ENCODE measurements at regions of chr1 and their contacts with region 1.

Region 1: DNA sequence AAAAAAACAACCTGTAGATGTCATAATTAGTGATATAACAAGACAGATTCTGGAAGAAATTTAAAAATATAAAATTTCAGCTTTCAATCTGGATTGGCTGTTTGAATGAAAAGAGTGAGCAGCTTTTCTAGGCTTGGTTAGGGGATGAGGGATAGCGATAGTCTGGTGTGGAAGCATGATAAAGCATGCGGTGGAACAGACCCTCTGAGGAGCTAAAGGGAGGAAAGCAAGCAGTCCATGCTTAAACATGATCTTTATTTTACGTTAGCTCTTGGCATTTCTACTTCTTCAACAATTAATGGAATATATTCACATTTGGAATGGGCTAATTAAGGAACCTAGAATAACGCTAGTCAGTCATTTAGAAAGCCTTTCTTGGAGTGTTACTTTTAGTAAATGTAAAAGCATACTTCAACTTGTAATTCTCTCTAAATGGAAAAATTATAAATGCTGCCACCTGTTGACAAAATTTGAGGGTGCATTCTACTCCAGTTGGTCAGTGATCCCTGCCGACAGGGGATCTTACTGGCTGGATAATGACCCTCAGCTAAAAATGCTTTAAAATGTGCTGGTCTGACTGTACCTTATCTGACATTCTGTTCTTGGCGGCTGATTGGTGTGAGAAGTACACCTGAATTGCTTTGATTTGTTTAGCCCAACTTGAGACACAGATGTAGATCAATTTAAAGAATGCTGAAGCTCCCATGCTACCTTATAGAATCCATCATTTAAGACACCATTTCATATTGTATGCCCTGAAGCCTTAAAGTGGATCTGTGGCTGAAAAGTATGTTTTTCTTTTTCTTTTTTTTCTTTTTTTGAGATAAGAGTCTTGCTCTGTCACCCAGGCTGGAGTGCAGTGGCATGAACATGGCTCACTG is 61.2 kb downstream of the AK4 start:
- DNase-seq: peak in 1 of 2 experiments; percentile 42
- H3K4me3 ChIP-seq: no peak overlapping the region
- H3K27ac ChIP-seq: no peak overlapping the region
- H3K4me1 ChIP-seq: peaks cover 0 to 3% (median 0%) of the 10 kb centered on the region in 4 experiments; a peak in 2 of 7 replicates
- H3K27me3 ChIP-seq: no peaks in the 10 kb centered on the region
- CTCF ChIP-seq: peak; percentile 5 to 54 (median 42)
- EP300 ChIP-seq: no peak
- POLR2A ChIP-seq: no peak
- RAD21 ChIP-seq: peak; percentile 40 to 49

Region 2: DNA sequence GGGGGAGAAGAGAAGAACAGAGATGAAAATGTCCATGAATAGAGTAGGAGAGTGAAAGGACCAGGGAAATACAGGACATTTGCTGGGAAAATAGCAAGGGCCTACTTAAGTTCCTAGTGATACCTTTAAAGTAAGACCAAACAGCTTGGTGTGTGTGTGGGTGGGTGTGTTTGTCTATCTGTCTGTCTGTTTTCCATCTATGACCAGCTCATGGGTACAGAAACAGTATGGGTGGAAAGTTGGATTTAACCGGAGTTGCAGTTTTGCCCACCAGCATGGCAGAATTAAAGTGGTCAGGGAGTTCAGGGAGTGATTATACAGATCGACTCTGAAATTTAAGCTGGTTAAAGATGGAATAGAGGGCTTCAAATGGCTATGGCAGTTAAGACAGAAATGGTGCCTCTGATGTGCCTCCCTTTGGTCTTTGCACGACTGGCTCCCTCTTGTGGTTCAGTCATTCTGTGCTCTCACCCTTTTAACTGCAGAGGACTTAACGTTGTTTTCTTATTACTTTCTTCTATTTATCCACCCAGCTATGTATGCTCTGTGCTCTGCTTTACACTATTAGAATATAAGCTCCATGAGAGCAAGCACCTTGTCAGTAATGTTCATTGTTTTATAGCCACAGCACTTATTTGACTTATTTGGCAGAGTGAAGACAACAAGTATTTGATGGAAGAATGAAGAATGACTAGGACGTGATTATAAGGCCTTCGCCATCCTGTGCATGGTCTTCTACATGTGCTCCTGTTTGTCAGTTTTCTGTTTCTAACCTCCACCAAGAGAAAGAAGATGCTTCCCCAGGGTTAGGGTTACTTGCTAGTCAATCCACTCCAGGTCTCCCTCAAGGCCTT is 133.9 kb before region 1 on chr1:
- CTCF ChIA-PET with region 1: interaction called, 18 read pairs
- POLR2A ChIA-PET with region 1: no interaction called
- DNase-seq: peak in 1 of 2 experiments; percentile 59
- H3K4me3 ChIP-seq: no peak overlapping the region
- H3K27ac ChIP-seq: no peak overlapping the region
- H3K4me1 ChIP-seq: no peaks in the 10 kb centered on the region
- H3K27me3 ChIP-seq: no peaks in the 10 kb centered on the region; a peak in 1 of 7 replicates
- CTCF ChIP-seq: peak; percentile 52 to 81 (median 76)
- EP300 ChIP-seq: no peak
- POLR2A ChIP-seq: no peak
- RAD21 ChIP-seq: peak; percentile 83

Region 3: GRCh38 chr1:65148548-65149350 is 60.5 kb before region 1 on chr1:
- CTCF ChIA-PET with region 1: interaction called, 7 read pairs
- POLR2A ChIA-PET with region 1: interaction called, 12 read pairs
- DNase-seq: peak; percentile 50 to 83
- H3K4me3 ChIP-seq: peak overlapping the region; percentile 43 to 77 (median 59)
- H3K27ac ChIP-seq: peak overlapping the region; percentile 13; the same call in 1 of the 2 replicates
- H3K4me1 ChIP-seq: peaks cover 9 to 15% (median 11%) of the 10 kb centered on the region in 4 experiments
- H3K27me3 ChIP-seq: peaks cover 2 to 22% (median 14%) of the 10 kb centered on the region in 4 experiments; a peak in 6 of 7 replicates
- CTCF ChIP-seq: no peak
- EP300 ChIP-seq: no peak
- POLR2A ChIP-seq: peak; percentile 45 to 70
- RAD21 ChIP-seq: no peak

Region 4: DNA sequence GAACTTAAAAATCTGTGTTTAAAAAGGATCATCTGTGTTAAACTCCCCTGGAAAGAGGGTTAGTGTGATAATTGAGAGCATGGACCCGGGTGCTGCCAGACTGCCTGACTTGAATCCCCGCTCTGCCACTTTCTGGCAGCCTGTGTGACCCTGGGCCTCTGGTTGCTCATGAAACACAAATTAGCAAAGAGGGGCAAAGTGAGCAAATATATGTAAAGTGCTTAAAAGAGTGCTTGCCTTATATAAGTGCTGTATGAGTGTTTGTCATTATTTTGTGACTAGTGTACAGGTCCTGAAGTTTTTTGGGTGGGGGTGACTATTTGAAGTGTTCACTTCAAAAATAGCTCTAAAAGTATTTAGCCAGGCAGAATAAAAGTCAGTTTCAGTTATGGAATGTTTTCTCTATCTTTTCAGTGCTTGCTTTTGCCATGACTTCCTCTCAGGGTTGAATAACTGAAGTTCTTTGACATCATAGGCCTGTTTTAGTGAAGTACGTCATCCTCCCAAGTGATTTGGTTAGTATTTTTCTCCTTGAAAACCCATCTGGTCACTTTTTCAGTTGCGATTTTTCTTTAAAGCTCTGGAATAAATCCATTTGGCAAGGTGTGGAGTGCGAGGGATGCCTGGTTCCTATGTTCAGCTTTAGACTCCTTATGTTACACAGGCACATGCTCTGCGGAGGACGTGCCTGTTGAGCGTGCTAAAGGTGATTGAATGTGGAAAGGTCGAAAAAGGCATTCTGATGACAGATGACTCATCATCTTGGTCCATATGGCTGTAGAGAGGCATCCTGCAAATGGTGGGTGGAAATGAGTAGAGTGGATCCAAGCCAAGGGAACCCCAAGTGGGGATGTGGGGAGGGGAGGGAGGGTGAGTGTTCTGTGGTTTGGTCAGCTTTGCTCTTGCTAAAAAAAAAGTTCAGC is 13.5 kb before region 1 on chr1:
- CTCF ChIA-PET with region 1: interaction called, 52 read pairs
- POLR2A ChIA-PET with region 1: no interaction called
- DNase-seq: no peak
- H3K4me3 ChIP-seq: no peak overlapping the region
- H3K27ac ChIP-seq: no peak overlapping the region
- H3K4me1 ChIP-seq: no peaks in the 10 kb centered on the region
- H3K27me3 ChIP-seq: no peaks in the 10 kb centered on the region
- CTCF ChIP-seq: no peak
- EP300 ChIP-seq: no peak
- POLR2A ChIP-seq: no peak
- RAD21 ChIP-seq: no peak

Measured in H1 (cell line).